ENCODE measurements at regions of chr18 and their contacts with region 1.

Region 1: DNA sequence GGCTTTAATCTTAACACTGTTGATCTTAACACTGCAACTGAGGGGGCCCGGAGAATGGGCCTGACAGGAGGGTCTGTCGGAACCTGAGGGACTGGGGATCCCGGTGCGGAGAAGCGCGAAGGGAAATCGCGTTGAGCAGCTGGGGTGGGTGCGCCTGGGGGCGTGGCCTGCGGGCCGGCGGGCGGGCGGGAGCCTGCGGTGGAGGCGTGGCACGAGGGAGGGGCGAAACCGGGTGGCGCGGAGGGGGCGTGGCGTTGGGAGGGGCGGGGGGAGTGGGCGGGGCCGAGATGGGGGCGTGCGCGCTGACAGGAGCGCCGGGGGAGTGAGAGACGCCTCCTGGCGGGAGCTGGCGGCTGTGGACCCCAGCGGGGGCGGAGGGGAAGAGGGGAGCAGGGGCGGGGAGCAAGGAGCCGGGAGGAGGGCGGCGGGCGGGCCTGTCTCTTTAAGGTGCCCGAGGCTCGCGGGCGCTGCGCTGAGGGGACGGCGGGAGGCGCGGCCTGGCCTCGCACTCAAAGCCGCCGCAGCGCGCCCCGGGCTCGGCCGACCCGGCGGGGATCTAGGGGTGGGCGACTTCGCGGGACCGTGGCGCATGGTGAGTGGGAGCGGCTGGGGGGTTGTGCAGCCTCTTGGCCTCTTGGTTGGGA is at the start of gene TWSG1:
- DNase-seq: peak; percentile 91
- H3K4me3 ChIP-seq: peak within 1 kb of the TSS; percentile 64 to 76 (median 65)
- H3K27ac ChIP-seq: peak within 1 kb of the TSS; percentile 63
- H3K4me1 ChIP-seq: peaks cover 10% of the 10 kb centered on the region
- H3K27me3 ChIP-seq: no peaks in the 10 kb centered on the region
- CTCF ChIP-seq: peak in 1 of 2 donors; percentile 55
- total RNA-seq, gene TWSG1: 41.0 to 63.8 TPM

Region 2: GRCh38 chr18:9066817-9067306 is 267.6 kb before region 1 on chr18:
- CTCF ChIA-PET with region 1: no interaction called
- dilution Hi-C with region 1: no loop called
- in situ Hi-C with region 1: no loop called
- intact Hi-C with region 1: loop called (anchors 2 kb)
- DNase-seq: peak; percentile 15
- H3K4me3 ChIP-seq: no peak overlapping the region
- H3K27ac ChIP-seq: no peak overlapping the region
- H3K4me1 ChIP-seq: peaks cover 12% of the 10 kb centered on the region
- H3K27me3 ChIP-seq: no peaks in the 10 kb centered on the region
- CTCF ChIP-seq: no peak

Region 3: GRCh38 chr18:9287036-9287435 is 47.4 kb before region 1 on chr18:
- CTCF ChIA-PET with region 1: interaction called, 11 read pairs
- dilution Hi-C with region 1: no loop called
- in situ Hi-C with region 1: no loop called
- intact Hi-C with region 1: no loop called
- DNase-seq: no peak
- H3K4me3 ChIP-seq: no peak overlapping the region
- H3K27ac ChIP-seq: no peak overlapping the region
- H3K4me1 ChIP-seq: peaks cover 2% of the 10 kb centered on the region
- H3K27me3 ChIP-seq: no peaks in the 10 kb centered on the region
- CTCF ChIP-seq: no peak

Region 4: DNA sequence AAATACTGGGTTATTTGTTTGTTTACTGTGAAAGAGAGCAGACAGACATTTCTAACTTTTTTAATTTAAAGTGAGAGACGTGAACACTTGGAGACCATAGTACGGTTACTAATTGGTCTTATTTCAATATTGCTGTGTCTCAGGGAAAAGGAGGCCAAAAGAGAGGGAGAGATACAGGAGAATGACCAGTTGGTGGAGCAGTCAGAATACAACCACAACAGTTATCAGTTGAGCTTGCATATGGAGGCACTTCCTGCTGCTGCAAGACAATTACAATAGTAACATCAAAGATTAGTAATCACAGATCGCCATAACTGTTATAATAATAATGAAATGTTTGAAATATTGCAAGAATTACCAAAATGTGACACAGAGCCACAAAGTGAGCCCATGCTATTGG is 58.3 kb after region 1 on chr18:
- CTCF ChIA-PET with region 1: no interaction called
- dilution Hi-C with region 1: no loop called
- in situ Hi-C with region 1: no loop called
- intact Hi-C with region 1: no loop called
- DNase-seq: no peak
- H3K4me3 ChIP-seq: no peak overlapping the region
- H3K27ac ChIP-seq: no peak overlapping the region
- H3K4me1 ChIP-seq: no peaks in the 10 kb centered on the region
- H3K27me3 ChIP-seq: no peaks in the 10 kb centered on the region
- CTCF ChIP-seq: peak in 1 of 2 donors; percentile 42